PC-9 (cell line): ENCODE measurements at regions of chr1 and their contacts with region 1.

Region 1: DNA sequence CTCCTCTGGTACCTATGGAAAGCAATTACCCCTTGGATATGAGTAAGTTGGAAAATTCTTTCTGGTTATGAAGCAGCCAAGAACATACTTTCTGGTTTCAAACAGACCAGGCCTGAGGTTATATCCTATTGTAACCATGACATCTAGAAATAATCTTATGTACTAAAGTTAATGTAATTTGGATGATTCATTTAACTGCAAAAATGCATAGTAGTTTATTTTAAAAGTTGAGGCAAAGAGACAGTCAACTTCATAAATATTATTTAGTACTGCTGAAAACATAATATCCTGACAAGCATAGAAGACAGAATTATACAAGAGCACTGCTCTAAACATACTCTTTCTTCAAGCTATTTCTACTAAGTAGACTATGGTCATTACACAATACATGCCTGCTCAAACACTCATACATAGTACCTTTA is 25.5 kb downstream of the ODF2L start:
- DNase-seq: no peak
- H3K4me3 ChIP-seq: no peak overlapping the region
- H3K27ac ChIP-seq: no peak overlapping the region
- H3K4me1 ChIP-seq: no peaks in the 10 kb centered on the region
- H3K27me3 ChIP-seq: no peaks in the 10 kb centered on the region
- CTCF ChIP-seq: no peak

Region 2: GRCh38 chr1:86356247-86356646 is 14.4 kb before region 1 on chr1:
- CTCF ChIA-PET with region 1: no interaction called
- POLR2A ChIA-PET with region 1: no interaction called
- intact Hi-C with region 1: no loop called
- DNase-seq: no peak
- H3K4me3 ChIP-seq: no peak overlapping the region
- H3K27ac ChIP-seq: no peak overlapping the region
- H3K4me1 ChIP-seq: no peaks in the 10 kb centered on the region
- H3K27me3 ChIP-seq: no peaks in the 10 kb centered on the region
- CTCF ChIP-seq: no peak

Region 3: DNA sequence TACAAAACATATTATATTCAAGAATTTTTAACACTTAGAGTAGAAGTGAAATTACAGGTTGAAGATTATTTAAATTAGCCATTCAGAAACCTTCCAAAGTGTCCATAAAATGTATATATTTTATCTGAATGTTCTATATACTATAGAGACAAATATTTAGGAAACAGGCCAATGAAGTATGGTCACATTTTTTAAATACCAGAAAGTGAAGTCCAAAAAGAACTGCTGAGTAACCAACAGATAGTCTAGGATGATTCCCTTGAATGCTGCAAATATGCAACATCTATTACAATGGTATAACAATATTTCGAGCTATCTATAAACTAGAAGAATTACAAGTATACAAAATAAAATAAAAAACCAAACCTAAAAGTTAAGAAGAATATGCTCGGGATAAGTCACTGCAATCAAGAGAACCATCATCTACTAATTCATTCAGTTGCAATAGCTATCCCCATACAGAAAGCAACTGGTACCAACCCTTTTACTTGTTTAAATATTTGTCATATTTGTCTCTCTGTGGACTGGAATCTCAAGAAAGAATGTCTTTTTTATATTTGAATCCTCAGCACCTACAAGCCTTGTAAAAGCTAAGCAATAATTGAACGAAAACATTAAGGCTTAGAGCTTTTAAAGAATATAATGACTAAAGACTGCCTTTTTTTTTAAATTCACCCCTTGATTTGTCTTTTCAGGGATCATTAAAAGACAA is 17.5 kb after region 1 on chr1:
- CTCF ChIA-PET with region 1: no interaction called
- POLR2A ChIA-PET with region 1: interaction called, 13 read pairs
- intact Hi-C with region 1: no loop called
- DNase-seq: no peak
- H3K4me3 ChIP-seq: no peak overlapping the region
- H3K27ac ChIP-seq: no peak overlapping the region
- H3K4me1 ChIP-seq: 0 out of 2 replicates have a peak, but pooled peaks cover 15% of the 10 kb centered on the region
- H3K27me3 ChIP-seq: no peaks in the 10 kb centered on the region
- CTCF ChIP-seq: no peak

Region 4: DNA sequence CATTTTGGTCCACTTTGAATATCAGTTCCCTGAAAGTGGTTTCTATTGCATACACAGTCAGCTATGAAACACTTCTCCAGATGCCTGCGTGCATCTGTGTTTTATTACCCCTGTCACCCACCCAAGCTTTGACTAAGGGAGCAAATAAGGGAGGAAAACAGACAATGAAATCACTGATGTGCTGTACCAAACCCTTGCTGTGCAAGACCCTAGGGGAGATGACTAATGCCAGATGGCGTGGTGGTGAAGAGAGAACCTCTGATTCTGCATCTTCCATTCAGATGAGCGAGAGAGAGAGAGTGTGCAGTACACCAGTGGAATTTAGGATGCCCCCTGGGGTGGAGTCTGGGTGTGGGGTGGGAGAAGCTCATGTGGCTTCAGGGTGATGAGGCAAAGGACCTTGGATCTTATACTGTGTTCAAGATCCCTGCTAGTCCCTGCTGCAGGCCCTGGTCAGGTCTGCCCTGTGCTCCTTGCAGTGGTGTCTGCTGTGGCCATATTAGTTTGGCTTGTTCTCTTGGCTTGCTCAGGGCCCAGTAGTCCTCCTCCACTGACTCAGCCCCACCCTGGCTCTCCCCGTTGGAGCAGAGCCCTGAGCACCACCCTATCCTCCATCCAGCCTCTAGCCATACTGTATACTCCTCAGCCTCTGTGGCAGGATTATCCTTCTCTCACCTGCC is 116.7 kb after region 1 on chr1:
- CTCF ChIA-PET with region 1: interaction called, 22 read pairs
- POLR2A ChIA-PET with region 1: no interaction called
- intact Hi-C with region 1: no loop called
- DNase-seq: no peak
- H3K4me3 ChIP-seq: no peak overlapping the region
- H3K27ac ChIP-seq: no peak overlapping the region
- H3K4me1 ChIP-seq: no peaks in the 10 kb centered on the region
- H3K27me3 ChIP-seq: no peaks in the 10 kb centered on the region
- CTCF ChIP-seq: no peak

Region 5: GRCh38 chr1:86517336-86517735 is 146.7 kb after region 1 on chr1:
- CTCF ChIA-PET with region 1: no interaction called
- POLR2A ChIA-PET with region 1: no interaction called
- intact Hi-C with region 1: no loop called
- DNase-seq: peak; percentile 38 to 85
- H3K4me3 ChIP-seq: no peak overlapping the region
- H3K27ac ChIP-seq: peak overlapping the region; percentile 28; the same call in 1 of the 2 replicates
- H3K4me1 ChIP-seq: peaks cover 12% of the 10 kb centered on the region
- H3K27me3 ChIP-seq: no peaks in the 10 kb centered on the region
- CTCF ChIP-seq: no peak